ENCODE measurements at regions of chr3 and their contacts with region 1.

Region 1: DNA sequence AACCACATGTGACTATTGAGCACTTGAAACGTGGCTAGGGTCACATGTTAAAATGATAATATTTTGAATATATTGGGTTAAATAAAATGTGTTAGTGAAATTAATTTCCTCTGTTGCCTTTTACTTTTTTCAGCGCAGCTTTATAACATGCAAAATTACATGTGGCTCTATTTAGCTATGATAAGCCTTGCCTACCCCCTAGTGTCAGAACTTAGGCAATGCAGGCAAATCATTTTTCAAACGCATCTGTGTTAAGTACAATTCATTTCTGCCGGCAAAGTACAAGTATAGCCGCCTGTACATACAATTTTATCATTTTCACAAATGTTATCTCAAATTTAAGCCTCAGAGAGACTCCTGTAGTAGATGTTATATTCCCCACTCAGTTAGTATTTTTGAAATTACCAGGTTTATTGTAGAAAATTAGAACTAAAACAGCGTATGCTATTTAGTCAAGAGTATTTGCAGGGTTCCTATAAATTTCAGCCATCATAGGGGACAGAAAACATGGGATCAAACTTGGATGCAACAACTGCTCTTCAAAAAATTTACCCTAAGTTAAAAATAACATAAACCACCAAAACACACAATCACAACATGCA is 56.1 kb downstream of the TAFA4 start:
- DNase-seq: peak in 2 of 6 donors; percentile 5 to 38
- ATAC-seq: peak; percentile 64 to 90 (median 88)
- H3K4me3 ChIP-seq: no peak overlapping the region
- H3K27ac ChIP-seq: no peak overlapping the region
- H3K4me1 ChIP-seq: no peaks in the 10 kb centered on the region
- H3K27me3 ChIP-seq: no peaks in the 10 kb centered on the region
- CTCF ChIP-seq: peak; percentile 49 to 72 (median 64)

Region 2: DNA sequence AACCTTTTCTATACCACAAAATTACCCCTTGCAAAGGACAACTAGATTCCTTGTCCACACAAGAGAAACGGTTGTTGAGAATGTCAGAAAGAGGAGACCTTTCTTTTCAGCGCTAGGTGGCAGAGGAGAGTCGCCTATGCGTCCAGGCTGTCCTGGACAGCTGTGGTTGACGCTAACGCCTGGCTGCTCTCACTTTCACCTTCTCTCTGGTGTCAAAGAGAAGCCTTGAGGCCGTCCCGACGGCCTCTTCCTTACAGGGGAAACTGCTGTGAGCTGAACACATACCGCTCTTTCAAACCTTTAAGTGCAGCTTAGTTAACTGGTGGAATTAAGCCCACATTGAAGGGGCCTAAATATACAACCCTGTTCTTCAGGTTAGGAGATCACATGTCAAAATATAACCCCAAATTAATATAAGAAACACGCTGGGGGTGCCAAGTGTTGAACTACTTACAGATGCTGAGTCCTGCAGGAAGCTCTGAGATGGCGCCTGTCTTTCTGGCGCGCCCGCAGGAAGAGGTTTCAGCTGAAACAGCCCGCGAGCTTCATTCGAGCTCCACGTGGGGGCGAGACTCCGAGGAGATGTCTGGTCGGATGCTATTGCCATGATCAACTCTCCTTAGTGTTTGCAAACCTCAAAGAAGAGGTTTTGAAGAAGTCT is 1904.2 kb before region 1 on chr3:
- intact Hi-C with region 1: loop called in 1 of 3 experiments (anchors 10 kb)
- DNase-seq: peak; percentile 50 to 76 (median 72)
- ATAC-seq: peak; percentile 97 to 100 (median 100)
- H3K4me3 ChIP-seq: peak overlapping the region in 2 of 4 donors; percentile 15 to 28
- H3K27ac ChIP-seq: no peak overlapping the region
- H3K4me1 ChIP-seq: no peaks in the 10 kb centered on the region
- H3K27me3 ChIP-seq: peaks cover 0 to 6% (median 3%) of the 10 kb centered on the region in 4 donors
- CTCF ChIP-seq: peak; percentile 59 to 74 (median 72)

Region 3: GRCh38 chr3:67113802-67114407 is 1762.3 kb before region 1 on chr3:
- intact Hi-C with region 1: loop called in 1 of 3 experiments (anchors 10 kb)
- DNase-seq: peak; percentile 56 to 86 (median 74)
- ATAC-seq: peak; percentile 76 to 100 (median 98)
- H3K4me3 ChIP-seq: no peak overlapping the region
- H3K27ac ChIP-seq: no peak overlapping the region
- H3K4me1 ChIP-seq: no peaks in the 10 kb centered on the region
- H3K27me3 ChIP-seq: no peaks in the 10 kb centered on the region
- CTCF ChIP-seq: peak; percentile 71 to 85 (median 79)

Region 4: DNA sequence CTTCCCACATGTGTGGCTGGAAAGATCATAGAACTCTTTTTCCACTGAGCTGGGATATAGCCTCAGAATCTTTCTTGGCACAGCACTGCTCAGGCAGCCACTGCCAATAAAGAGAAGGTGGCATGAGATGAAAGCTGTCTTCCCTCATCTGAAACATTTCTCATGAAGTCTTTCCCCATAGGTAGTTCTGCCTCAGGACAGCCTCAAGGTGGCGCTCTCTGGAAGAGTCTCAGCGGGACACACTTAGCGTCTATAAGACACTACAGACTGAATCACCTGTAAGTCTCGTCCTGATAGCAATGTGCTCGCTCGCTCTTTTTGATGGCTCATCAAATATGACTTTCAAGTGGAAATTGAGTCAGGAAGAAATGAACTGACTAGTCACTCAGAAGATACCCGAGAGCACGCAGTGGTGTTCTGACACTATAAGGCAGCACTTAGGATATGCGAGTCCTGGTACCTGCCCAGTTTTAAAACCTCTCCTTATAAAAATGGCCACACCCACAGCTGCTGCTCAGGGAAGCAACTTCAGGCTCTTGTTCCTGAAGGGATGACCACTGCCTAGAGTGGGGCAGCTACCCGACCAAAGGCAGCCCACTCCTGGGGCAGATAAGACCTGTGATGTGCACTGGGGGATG is 1491.3 kb before region 1 on chr3:
- intact Hi-C with region 1: loop called in 1 of 3 experiments (anchors 10 kb)
- DNase-seq: peak in 4 of 6 donors; percentile 7 to 66 (median 40)
- ATAC-seq: peak in 3 of 4 donors; percentile 71 to 82 (median 75)
- H3K4me3 ChIP-seq: no peak overlapping the region
- H3K27ac ChIP-seq: no peak overlapping the region
- H3K4me1 ChIP-seq: no peaks in the 10 kb centered on the region
- H3K27me3 ChIP-seq: no peaks in the 10 kb centered on the region
- CTCF ChIP-seq: peak in 3 of 4 donors; percentile 19 to 26 (median 25)

Region 5: GRCh38 chr3:69214241-69214640 is 338.0 kb after region 1 on chr3:
- intact Hi-C with region 1: no loop called
- DNase-seq: no peak
- ATAC-seq: no peak
- H3K4me3 ChIP-seq: no peak overlapping the region
- H3K27ac ChIP-seq: no peak overlapping the region
- H3K4me1 ChIP-seq: peaks cover 0 to 14% (median 9%) of the 10 kb centered on the region in 3 donors
- H3K27me3 ChIP-seq: no peaks in the 10 kb centered on the region
- CTCF ChIP-seq: no peak

Measured in pancreas (tissue), 10 donors.